Activated T-helper 2 cell treated with anti-CD3 and anti-CD28 coated beads, Interferon-gamma antibody, Interleukin-2, Interleukin-4, amounts not matched to agents 10 μg/mL and 5 μg/mL and 100 μg/mL, durations not matched to agents 14 hours and 24 hours and 36 hours (primary cell): ENCODE measurements at regions of chr12 and their contacts with region 1.

Region 1: DNA sequence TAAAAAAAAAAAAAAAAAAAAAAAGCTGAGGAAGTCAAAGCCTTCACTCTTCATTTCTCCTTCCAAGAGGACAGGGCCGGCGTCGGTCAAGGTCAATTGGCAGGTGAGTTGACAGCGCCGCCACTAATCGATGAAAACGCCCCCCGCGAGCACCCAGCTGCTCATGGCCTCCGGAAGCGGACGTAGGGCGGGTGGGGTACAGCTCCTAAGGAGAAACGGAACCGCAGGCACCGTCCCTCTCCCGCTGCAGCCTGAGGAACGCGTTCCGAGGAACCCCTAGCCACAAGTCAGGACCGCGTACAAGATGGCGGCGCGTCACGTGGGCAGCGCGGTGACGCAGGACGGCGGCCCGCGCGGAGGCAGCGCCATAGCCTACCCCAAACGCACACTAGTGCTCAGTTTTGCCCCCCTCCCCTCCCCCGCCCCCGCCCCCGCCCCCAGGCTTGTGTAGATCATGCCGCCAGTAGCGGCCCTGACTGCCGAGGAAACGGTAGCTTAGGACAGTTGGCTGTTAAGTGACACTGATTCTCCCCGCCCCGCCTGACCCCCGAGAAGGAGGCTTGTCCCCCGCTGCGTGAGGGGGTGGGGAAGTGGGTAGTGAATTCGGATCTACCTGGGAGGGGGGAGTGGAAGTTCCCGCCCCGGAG is at the start of gene ATF1:
- DNase-seq: peak; percentile 89
- H3K4me3 Mint-ChIP-seq: peak within 1 kb of the TSS; percentile 98
- H3K27ac Mint-ChIP-seq: peak within 1 kb of the TSS; percentile 97
- H3K4me1 Mint-ChIP-seq: peaks cover 23% of the 10 kb centered on the region
- H3K27me3 Mint-ChIP-seq: no peaks in the 10 kb centered on the region
- total RNA-seq, gene ATF1: 58.8 and 63.0 TPM in 2 replicates

Region 2: DNA sequence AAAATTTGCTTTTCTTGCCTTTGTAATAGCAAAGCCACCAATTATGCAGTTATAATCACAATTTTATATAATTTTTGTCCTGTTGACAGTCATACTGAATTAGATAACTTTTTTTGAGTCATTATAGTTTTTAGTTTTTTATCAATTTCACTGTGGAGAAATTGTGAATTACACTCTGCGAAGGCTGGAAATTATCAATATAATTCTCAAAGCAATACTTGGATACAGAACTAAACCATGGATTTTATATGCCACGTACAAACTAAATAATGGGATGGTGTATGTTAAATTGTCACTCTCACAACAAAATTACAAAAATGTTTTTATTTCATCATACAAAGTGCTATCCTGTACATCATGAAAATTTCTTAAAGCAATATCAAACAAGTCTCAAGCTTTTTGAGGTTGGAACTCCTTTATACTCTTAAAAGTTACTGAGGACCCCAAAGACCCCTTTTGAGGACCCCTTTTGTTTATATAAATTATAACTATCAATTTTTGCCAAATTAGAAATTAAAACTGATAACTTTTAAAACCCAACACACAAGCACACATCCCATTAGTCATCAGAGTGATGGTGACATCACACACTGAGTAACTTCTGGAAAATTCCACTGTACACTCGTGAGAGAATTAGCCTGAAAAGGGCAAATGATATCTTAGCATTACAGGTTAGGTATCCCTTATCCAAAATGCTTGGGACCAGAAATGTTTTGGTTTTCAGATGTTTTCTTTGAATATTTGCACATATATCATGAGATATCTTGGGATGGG is 833.1 kb before region 1 on chr12:
- intact Hi-C with region 1: no loop called
- DNase-seq: no peak
- H3K4me3 Mint-ChIP-seq: no peak overlapping the region
- H3K27ac Mint-ChIP-seq: no peak overlapping the region
- H3K4me1 Mint-ChIP-seq: peaks cover 2% of the 10 kb centered on the region
- H3K27me3 Mint-ChIP-seq: peaks cover 7% of the 10 kb centered on the region

Region 3: DNA sequence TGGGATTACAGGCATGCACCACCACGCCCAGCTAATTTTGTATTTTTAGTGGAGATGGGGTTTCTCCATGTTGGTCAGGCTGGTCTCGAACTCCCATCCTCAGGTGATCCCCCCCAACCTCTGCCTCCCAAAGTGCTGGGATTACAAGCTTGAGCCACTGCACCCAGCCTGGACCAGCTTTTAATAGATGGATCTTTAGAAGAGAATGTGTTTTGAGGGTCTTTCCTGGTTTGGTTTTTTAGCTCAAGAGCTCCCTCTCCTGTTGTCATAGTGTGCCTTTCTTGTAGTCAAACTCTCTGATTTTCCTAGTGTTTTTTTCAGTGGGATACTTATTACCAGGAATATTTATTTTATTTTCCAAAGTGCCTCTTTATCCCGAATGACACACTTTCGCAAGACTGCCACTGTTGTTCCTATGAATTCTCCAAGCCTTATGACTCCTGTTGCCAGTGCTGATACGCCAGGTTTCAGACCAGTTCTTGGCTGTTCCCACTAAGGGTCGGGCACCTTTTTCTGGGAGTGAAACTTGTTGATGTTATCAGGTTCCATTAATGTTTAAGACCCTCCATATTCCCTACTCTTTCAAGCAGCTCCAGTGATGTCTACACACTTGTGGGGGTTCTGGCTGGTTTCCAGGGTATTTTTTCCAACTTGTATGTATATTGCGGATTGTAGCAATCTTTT is 449.0 kb before region 1 on chr12:
- intact Hi-C with region 1: no loop called
- DNase-seq: no peak
- H3K4me3 Mint-ChIP-seq: no peak overlapping the region
- H3K27ac Mint-ChIP-seq: no peak overlapping the region
- H3K4me1 Mint-ChIP-seq: peaks cover 2% of the 10 kb centered on the region
- H3K27me3 Mint-ChIP-seq: no peaks in the 10 kb centered on the region

Region 4: DNA sequence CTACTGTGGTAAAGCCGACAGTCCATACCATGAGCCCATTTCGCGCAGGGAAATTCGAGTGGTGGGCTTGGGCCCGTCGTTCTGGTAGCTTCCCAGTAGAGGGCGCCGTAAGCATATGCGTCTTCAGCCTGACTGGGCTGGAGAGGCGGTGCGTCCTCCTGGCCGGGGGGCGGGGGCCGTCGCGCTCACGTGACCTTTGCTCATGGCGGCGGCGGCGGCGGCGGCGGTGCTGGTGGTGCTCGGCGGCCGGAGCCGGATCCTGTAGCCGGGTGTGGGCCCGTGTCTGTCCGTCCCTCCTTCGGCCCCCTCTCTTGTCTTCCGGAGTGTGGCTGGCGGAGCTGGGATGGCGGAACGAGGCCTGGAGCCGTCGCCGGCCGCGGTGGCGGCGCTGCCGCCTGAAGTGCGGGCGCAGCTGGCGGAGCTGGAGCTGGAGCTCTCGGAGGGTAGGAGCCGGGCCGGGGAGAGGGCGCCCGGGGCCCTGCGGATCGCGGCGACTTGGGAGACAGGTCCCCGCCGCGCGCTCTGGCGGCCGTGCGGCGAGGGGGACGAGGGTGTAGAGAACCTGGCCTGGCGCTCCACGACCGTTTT is 258.9 kb before region 1 on chr12 and contains the start of gene DIP2B:
- intact Hi-C with region 1: loop called (anchors 10 kb)
- DNase-seq: peak; percentile 92
- H3K4me3 Mint-ChIP-seq: peak within 1 kb of the TSS; percentile 96
- H3K27ac Mint-ChIP-seq: peak within 1 kb of the TSS; percentile 93
- H3K4me1 Mint-ChIP-seq: peaks cover 45% of the 10 kb centered on the region
- H3K27me3 Mint-ChIP-seq: no peaks in the 10 kb centered on the region
- total RNA-seq, gene DIP2B: 27.4 and 29.1 TPM in 2 replicates

Region 5: DNA sequence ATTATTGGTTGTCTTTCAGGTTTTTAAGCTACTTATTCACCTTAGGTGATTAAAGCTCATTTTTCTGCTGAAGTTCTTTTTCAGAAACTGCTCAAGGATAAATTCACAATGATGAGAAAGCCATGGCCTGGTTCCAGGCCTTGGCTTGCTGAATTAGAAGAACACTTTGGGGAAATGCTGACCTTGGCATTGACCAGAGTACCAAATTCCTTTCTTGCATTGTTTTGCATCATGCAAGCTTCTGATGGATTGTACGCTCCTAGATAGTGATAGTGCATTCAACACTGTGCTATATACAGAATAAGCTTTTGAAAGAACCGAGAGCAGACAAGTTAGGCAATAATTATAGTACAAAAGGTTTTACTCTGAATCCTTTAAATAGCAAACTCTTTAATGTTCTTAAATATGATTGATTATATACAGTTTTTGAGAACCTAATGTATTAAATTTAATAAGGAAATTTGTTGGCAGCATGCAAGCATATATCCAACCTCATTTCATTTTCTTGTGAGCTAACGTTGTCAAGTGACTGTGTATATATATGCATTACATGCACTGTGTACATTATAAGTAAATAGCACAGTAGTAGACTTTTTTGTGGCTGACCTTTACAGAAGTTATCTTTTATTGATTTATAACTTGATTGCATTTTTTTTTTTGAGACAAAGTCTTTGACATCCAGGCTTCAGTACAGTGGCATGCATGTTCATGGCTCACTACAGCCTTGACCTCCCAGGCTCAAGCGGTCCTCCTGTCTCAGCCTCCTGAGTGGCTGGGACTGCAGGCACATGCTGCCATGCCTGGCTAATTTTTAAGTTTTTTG is 159.7 kb before region 1 on chr12:
- intact Hi-C with region 1: no loop called
- DNase-seq: no peak
- H3K4me3 Mint-ChIP-seq: no peak overlapping the region
- H3K27ac Mint-ChIP-seq: no peak overlapping the region
- H3K4me1 Mint-ChIP-seq: peaks cover 28% of the 10 kb centered on the region
- H3K27me3 Mint-ChIP-seq: no peaks in the 10 kb centered on the region

Region 6: DNA sequence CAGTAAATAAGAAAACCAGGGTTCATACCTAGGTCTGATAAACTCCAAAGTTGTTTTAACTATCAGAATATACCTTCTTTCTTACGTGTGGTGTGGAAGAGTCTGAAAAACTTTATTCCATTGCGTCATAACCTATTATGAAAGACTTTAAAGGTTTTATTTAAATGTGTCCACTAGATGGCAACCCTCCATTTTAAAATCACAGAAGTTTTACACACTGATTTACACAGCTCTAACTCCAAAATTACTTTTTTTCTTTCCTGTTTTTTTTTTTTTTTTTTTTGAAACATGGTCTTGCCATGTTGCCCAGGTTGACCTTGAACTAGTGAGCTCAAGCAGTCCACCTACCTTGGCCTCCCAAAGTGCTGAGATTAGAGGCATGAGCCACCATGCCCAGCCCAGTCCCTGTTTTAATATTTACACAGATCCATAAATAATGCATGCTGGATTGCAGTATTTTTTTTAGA is 61.6 kb after region 1 on chr12:
- intact Hi-C with region 1: loop called (anchors 5 kb)
- DNase-seq: no peak
- H3K4me3 Mint-ChIP-seq: no peak overlapping the region
- H3K27ac Mint-ChIP-seq: no peak overlapping the region
- H3K4me1 Mint-ChIP-seq: peaks cover 6% of the 10 kb centered on the region
- H3K27me3 Mint-ChIP-seq: no peaks in the 10 kb centered on the region

Region 7: DNA sequence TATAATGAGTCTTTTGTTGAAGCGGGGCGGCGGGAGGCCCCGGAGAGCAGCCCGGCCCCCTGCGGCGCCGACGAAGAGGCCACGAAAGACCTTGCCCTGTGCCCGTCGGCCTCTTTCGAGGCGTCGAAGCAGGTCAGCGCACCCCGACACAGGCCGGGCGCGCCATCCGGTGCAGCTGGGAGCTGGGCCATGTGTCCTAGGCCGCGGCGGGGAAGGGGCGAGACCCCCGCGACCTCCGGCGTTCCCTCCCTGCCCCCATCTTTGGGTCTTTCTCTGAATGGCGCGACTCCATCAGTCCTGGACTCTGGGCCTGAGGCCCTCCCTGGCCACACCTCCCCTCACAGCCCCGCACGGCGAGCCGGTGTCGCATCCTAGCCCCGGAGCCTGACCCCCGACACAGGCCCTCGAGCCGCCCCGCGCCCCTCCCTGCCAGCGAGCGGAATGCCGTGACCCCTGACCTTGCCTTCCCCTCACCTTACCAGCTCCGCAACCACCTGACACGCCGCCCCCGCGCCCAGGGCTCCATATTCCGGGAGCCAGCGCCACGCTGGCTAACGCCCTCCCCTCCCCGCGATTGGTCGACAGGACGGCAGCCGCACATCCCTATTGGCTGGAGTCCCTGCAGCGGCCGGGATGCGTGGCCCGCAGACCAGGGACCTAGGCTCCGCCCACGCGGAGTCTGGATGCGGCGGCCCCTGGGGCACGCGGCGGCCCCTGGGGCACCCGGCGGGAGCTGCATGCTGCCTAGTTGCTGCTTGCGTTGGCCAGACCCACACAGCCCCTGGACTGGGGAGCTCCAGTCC is 262.3 kb after region 1 on chr12 and contains the start of gene SLC11A2:
- intact Hi-C with region 1: loop called (anchors 1 kb)
- DNase-seq: peak; percentile 89
- H3K4me3 Mint-ChIP-seq: peak within 1 kb of the TSS; percentile 98
- H3K27ac Mint-ChIP-seq: peak within 1 kb of the TSS; percentile 100
- H3K4me1 Mint-ChIP-seq: peaks cover 44% of the 10 kb centered on the region
- H3K27me3 Mint-ChIP-seq: peaks cover 7% of the 10 kb centered on the region
- total RNA-seq, gene SLC11A2: 56.6 and 62.9 TPM in 2 replicates

Region 8: DNA sequence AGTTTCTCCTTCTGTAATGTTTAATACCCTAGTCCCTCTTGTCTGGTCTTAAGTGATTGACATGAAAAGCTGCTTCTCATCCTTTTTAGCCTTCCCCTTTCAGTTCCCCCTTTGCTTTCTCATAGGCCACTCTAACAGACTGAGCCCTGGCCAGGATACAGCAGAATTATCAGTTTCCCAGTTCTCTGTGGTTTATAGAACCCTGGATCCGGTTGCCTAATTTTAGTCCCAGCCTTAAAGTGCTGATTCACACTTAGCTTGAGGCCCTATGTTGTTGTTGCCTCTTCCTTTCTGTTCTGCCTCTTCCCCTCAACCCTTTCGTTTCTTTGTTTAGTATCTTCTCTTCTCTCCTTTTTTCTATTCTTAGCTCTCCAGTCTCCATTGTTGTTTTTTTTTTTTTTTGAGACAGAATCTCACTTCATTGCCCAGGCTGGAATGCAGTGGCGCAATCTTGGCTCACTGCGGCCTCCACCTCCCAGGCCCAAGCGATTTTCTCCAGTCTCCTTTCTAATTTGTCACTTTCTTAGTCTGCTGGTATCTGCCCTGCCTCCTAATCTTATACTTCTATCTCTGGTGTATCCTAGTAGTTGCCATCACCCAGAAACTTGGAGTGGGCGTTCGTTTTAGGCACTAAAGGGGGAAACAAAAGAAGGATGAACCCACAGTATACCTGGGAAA is 563.1 kb after region 1 on chr12:
- intact Hi-C with region 1: loop called (anchors 10 kb)
- DNase-seq: no peak
- H3K4me3 Mint-ChIP-seq: peak overlapping the region; percentile 63
- H3K27ac Mint-ChIP-seq: peak overlapping the region; percentile 95
- H3K4me1 Mint-ChIP-seq: peaks cover 55% of the 10 kb centered on the region
- H3K27me3 Mint-ChIP-seq: no peaks in the 10 kb centered on the region